Gastrocnemius medialis (tissue), 4 donors: ENCODE measurements at regions of chr16 and their contacts with region 1.

Region 1: DNA sequence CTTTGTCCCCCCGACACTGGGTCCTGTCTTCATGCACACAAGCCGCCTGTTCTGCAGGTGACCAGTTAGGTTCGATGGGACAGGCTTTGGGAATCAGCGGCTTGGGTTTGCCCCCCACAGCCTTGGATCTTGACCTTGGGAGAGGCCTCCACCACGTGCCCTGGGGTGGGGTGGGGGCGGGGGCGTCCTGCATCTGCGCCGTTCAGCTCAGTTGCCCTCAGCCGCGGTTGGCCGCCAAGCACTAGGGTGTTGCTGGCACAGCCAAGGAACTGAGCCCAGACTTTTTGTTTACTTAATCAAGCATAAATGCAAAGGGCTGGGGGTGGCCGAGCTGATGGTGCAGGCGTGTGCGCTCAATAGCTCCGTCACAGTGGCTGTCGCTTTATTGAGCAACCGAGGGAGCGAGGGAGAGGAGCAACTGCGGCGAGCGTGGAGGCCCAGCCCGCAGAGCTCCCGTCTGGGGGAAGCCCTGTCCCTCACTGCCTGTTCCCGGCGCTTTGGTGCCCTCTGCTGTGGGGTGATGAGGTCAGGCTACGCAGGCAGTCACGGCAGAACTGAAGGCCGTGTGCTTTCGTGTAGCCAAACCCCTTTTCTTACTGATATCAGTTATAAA is 33.9 kb downstream of the JPH3 start:
- DNase-seq: peak; percentile 45 to 64
- ATAC-seq: peak; percentile 78 to 81
- H3K4me3 ChIP-seq: peak overlapping the region in 2 of 4 donors; percentile 1 to 20
- H3K27ac ChIP-seq: no peak overlapping the region
- H3K4me1 ChIP-seq: peaks cover 6 to 9% of the 10 kb centered on the region in 2 donors
- H3K27me3 ChIP-seq: peaks cover 8 to 14% (median 12%) of the 10 kb centered on the region in 3 donors
- CTCF ChIP-seq: peak; percentile 10 to 69 (median 59)
- POLR2A ChIP-seq: no peak

Region 2: GRCh38 chr16:87531418-87531817 is 104.8 kb before region 1 on chr16:
- in situ Hi-C with region 1: no loop called
- intact Hi-C with region 1: no loop called
- DNase-seq: no peak
- ATAC-seq: no peak
- H3K4me3 ChIP-seq: no peak overlapping the region
- H3K27ac ChIP-seq: no peak overlapping the region
- H3K4me1 ChIP-seq: no peaks in the 10 kb centered on the region
- H3K27me3 ChIP-seq: no peaks in the 10 kb centered on the region
- CTCF ChIP-seq: no peak
- POLR2A ChIP-seq: no peak

Region 3: GRCh38 chr16:87550496-87550961 is 85.6 kb before region 1 on chr16:
- in situ Hi-C with region 1: no loop called
- intact Hi-C with region 1: loop called (anchors 1 kb)
- DNase-seq: peak in 1 of 2 donors; percentile 27
- ATAC-seq: no peak
- H3K4me3 ChIP-seq: no peak overlapping the region
- H3K27ac ChIP-seq: no peak overlapping the region
- H3K4me1 ChIP-seq: no peaks in the 10 kb centered on the region
- H3K27me3 ChIP-seq: peaks cover 0 to 12% (median 3%) of the 10 kb centered on the region in 3 donors
- CTCF ChIP-seq: peak; percentile 59 to 93 (median 90)
- POLR2A ChIP-seq: no peak

Region 4: DNA sequence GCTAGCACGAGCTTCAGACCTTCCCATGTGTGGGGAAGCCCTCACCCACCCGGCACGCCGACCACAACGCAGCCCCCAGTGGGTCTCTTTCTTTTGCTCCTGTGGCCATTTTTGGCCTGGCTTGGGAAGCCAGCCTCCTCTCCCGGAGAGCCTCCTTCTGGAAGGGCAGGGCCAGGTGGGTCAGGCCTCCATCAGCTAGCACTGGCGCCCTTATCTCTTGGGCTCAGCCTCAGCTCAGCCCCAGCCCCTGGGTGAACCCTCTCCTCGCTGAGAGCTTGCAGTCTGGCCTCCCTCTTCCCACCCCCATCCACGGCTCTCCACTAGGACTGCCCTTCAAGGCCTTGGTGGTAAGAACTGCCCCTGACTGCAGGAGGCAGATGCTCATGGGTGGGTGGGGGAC is 48.5 kb before region 1 on chr16:
- in situ Hi-C with region 1: no loop called
- intact Hi-C with region 1: loop called (anchors 1 kb)
- DNase-seq: no peak
- ATAC-seq: no peak
- H3K4me3 ChIP-seq: no peak overlapping the region
- H3K27ac ChIP-seq: no peak overlapping the region
- H3K4me1 ChIP-seq: peaks cover under 1 to 12% of the 10 kb centered on the region in 2 donors
- H3K27me3 ChIP-seq: peaks cover 0 to 31% (median 10%) of the 10 kb centered on the region in 3 donors
- CTCF ChIP-seq: no peak
- POLR2A ChIP-seq: no peak

Region 5: GRCh38 chr16:87621976-87622713 is 14.0 kb before region 1 on chr16:
- in situ Hi-C with region 1: no loop called
- intact Hi-C with region 1: no loop called
- DNase-seq: no peak
- ATAC-seq: no peak
- H3K4me3 ChIP-seq: no peak overlapping the region
- H3K27ac ChIP-seq: no peak overlapping the region
- H3K4me1 ChIP-seq: no peaks in the 10 kb centered on the region
- H3K27me3 ChIP-seq: peaks cover 10 to 23% (median 18%) of the 10 kb centered on the region in 3 donors
- CTCF ChIP-seq: no peak
- POLR2A ChIP-seq: no peak